Activated CD8-positive, alpha-beta T cell treated with anti-CD3 and anti-CD28 coated beads for 36 hours (primary cell): ENCODE measurements at regions of chr15 and their contacts with region 1.

Region 1: DNA sequence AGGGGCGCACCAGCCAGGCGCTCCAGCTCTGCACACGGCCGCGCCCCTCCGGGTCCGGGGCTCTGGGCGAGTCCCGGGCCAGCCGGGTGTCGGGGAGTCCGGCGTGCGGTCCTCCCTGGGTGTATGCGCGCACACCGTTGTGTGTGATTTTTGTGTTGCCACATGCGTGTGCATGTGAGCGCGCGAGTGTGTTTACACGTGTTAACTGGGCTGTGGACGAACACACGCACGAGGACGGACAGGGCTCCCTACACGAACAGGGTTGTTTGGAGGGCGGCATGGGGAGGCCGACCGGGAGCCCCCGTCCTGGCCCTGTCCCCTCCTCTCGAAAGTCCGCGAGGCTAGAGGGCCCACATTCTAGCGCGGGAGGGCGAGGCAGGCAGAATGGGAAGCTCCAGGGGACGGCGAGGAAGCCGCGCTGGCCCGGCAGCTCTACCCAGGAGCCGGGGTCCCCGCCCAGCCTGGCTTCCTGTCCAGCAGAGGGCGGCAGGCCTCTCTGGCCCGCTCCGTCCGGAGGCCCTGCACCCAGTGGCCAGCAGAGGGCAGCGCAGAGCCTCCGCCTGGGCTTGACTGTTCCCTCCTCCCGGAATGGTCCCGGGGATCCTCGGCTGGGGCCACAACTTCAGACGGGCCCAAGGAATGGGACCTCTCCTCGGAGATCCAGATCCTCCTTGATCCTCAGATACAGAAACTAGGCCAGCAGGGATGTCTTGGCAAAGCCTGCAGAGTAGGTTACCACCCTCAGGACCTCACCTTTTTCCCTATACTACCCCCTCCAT is 611 bp upstream of the LINGO1 start:
- DNase-seq: peak; percentile 76
- ATAC-seq: peak; percentile 88
- H3K4me3 Mint-ChIP-seq: peak overlapping the region; percentile 33
- H3K27ac Mint-ChIP-seq: no peak overlapping the region
- H3K4me1 Mint-ChIP-seq: peaks cover 9% of the 10 kb centered on the region
- H3K27me3 Mint-ChIP-seq: peaks cover 38% of the 10 kb centered on the region
- CTCF ChIP-seq: peak; percentile 94

Region 2: DNA sequence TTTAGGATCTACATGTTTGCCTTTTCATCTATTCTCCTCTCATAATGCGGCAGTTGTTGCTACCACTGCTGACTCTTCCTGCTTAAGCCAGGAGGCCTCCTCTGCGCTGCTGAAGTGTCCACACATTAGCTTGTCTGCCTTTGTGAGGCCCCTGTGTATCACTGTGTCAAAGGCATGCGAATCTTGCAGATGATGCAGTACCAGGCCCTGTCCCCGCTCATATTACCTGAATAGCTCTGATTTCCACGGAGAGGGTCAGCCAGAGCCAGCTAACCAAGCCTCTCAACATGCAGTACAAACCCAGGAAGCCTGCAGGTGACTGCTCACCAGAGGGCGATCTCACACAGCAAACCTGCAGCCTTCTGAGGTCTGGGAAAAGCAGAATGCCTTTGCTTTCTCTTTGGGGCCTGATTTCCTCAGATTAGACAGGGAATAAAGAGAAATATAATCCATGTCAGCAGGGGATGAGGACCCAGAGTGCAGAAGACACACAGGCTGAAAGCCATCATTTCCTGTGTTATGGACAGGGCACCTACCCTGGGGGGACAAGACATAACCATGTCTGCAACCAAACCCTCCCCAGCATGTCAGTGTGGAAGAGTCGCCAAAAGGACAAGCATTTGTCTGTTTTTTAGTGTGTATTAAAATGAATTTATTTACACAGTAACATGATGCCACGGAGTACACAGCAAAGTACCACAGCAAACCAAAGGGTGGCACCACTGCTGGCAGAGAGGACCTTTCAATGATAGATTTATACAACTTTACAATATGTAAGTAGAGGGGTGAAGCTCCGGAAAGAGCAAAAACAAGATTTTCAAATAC is 525.6 kb before region 1 on chr15:
- CTCF ChIA-PET with region 1: interaction called, 11 read pairs
- POLR2A ChIA-PET with region 1: no interaction called
- intact Hi-C with region 1: no loop called
- DNase-seq: peak; percentile 65
- ATAC-seq: peak; percentile 65
- H3K4me3 Mint-ChIP-seq: no peak overlapping the region
- H3K27ac Mint-ChIP-seq: no peak overlapping the region
- H3K4me1 Mint-ChIP-seq: no peaks in the 10 kb centered on the region
- H3K27me3 Mint-ChIP-seq: no peaks in the 10 kb centered on the region
- CTCF ChIP-seq: peak; percentile 65

Region 3: GRCh38 chr15:77617476-77618230 is 15.7 kb before region 1 on chr15:
- CTCF ChIA-PET with region 1: interaction called, 18 read pairs
- POLR2A ChIA-PET with region 1: no interaction called
- intact Hi-C with region 1: no loop called
- DNase-seq: peak; percentile 22
- ATAC-seq: no peak
- H3K4me3 Mint-ChIP-seq: no peak overlapping the region
- H3K27ac Mint-ChIP-seq: no peak overlapping the region
- H3K4me1 Mint-ChIP-seq: no peaks in the 10 kb centered on the region
- H3K27me3 Mint-ChIP-seq: no peaks in the 10 kb centered on the region
- CTCF ChIP-seq: no peak

Region 4: DNA sequence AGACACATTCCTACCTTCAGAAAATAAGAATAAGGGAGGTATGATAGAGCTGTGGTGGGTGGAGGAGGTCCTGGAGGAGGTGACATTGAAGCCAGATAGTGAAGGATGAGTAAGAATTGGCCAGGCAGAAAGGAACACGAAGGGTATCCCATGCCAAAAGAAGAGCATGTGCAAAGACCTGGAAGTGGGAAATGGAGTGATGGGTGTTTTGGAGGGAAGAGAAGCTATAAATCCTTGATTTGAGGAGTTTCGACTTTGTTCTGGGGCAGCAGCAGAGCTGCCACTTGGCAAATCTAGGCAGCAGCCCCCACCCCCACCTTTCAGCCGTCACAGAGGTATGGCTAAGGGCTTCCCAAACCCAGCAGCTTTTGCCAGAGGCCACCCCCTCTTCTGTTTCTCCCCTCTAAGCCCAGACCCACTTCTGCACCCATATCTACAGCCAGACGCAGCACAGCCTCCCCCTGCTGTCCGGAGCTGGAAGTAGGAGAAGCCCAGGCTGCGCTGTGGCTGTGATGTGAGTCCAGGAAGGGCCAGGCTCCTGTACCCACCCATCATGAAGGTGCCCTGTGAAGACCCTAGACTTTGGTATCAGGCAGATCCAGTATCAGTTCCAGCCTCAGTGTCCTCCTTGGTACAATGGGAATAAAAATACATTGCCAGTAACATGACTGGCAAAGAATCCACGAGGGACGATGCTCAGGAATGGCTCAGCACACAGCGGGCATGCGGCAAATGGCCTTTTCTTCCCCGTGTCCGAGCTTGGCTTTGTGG is 188.1 kb after region 1 on chr15:
- CTCF ChIA-PET with region 1: interaction called, 42 read pairs
- POLR2A ChIA-PET with region 1: no interaction called
- intact Hi-C with region 1: loop called (anchors 10 kb)
- DNase-seq: peak; percentile 66
- ATAC-seq: peak; percentile 80
- H3K4me3 Mint-ChIP-seq: no peak overlapping the region
- H3K27ac Mint-ChIP-seq: no peak overlapping the region
- H3K4me1 Mint-ChIP-seq: peaks cover 2% of the 10 kb centered on the region
- H3K27me3 Mint-ChIP-seq: peaks cover 38% of the 10 kb centered on the region
- CTCF ChIP-seq: peak; percentile 57